Activated CD4-positive, alpha-beta memory T cell treated with anti-CD3 and anti-CD28 coated beads for 36 hours (primary cell): ENCODE measurements at regions of chr5 and their contacts with region 1.

Region 1: DNA sequence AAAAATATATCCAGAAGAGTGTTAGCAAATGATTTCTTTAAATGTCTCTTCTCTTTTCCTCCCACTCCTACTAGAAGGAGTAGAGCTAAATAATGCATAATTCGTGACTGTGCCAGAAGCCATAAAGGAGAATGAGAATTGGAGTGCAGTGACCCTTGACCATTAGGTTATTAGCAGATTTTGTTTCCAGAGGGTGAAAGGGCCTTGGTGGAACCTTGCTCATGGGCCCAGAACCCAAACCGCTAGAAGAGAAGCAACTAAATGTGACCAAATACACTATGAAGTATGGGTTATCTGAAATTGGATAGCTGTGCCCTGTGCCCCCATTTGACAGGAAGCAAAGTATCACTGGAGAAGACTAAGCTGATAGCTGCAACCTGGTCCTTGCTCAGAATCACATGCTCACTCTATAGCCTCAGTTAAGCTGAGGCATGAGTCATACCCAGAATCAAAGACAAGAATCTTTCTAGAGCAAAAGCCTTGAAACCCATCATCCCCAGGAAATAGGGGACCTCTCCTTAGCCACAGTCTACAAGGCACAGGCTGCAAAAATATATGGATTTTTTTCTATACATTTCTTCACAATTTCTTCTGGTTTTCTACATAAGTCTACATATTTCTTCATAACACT is 36.3 kb downstream of the CAPSL start:
- DNase-seq: peak; percentile 44
- H3K4me3 Mint-ChIP-seq: peak overlapping the region; percentile 41
- H3K27ac Mint-ChIP-seq: peak overlapping the region; percentile 79
- H3K4me1 Mint-ChIP-seq: peaks cover 77% of the 10 kb centered on the region
- H3K27me3 Mint-ChIP-seq: no peaks in the 10 kb centered on the region

Region 2: GRCh38 chr5:35672995-35673394 is 229.2 kb before region 1 on chr5:
- CTCF ChIA-PET with region 1: no interaction called
- POLR2A ChIA-PET with region 1: no interaction called
- intact Hi-C with region 1: loop called (anchors 1 kb)
- DNase-seq: peak; percentile 66
- H3K4me3 Mint-ChIP-seq: no peak overlapping the region
- H3K27ac Mint-ChIP-seq: peak overlapping the region; percentile 69
- H3K4me1 Mint-ChIP-seq: peaks cover 60% of the 10 kb centered on the region
- H3K27me3 Mint-ChIP-seq: no peaks in the 10 kb centered on the region

Region 3: GRCh38 chr5:35794684-35795375 is 107.3 kb before region 1 on chr5:
- CTCF ChIA-PET with region 1: interaction called, 3 read pairs
- POLR2A ChIA-PET with region 1: interaction called, 7 read pairs
- intact Hi-C with region 1: loop called (anchors 1 kb)
- DNase-seq: no peak
- H3K4me3 Mint-ChIP-seq: peak overlapping the region; percentile 31
- H3K27ac Mint-ChIP-seq: peak overlapping the region; percentile 89
- H3K4me1 Mint-ChIP-seq: peaks cover 86% of the 10 kb centered on the region
- H3K27me3 Mint-ChIP-seq: no peaks in the 10 kb centered on the region

Region 4: GRCh38 chr5:35838370-35839042 is 63.7 kb before region 1 on chr5:
- CTCF ChIA-PET with region 1: no interaction called
- POLR2A ChIA-PET with region 1: interaction called, 5 read pairs
- intact Hi-C with region 1: loop called (anchors 1 kb)
- DNase-seq: peak; percentile 76
- H3K4me3 Mint-ChIP-seq: peak overlapping the region; percentile 50
- H3K27ac Mint-ChIP-seq: peak overlapping the region; percentile 96
- H3K4me1 Mint-ChIP-seq: peaks cover 70% of the 10 kb centered on the region
- H3K27me3 Mint-ChIP-seq: no peaks in the 10 kb centered on the region

Region 5: GRCh38 chr5:35876921-35877320 is 25.2 kb before region 1 on chr5:
- CTCF ChIA-PET with region 1: no interaction called
- POLR2A ChIA-PET with region 1: interaction called, 7 read pairs
- intact Hi-C with region 1: loop called (anchors 1 kb)
- DNase-seq: no peak
- H3K4me3 Mint-ChIP-seq: no peak overlapping the region
- H3K27ac Mint-ChIP-seq: peak overlapping the region; percentile 80
- H3K4me1 Mint-ChIP-seq: peaks cover 79% of the 10 kb centered on the region
- H3K27me3 Mint-ChIP-seq: no peaks in the 10 kb centered on the region

Region 6: GRCh38 chr5:35919191-35919590 is 17.0 kb after region 1 on chr5:
- CTCF ChIA-PET with region 1: interaction called, 14 read pairs
- POLR2A ChIA-PET with region 1: interaction called, 4 read pairs
- intact Hi-C with region 1: loop called (anchors 1 kb)
- DNase-seq: peak; percentile 63
- H3K4me3 Mint-ChIP-seq: no peak overlapping the region
- H3K27ac Mint-ChIP-seq: peak overlapping the region; percentile 67
- H3K4me1 Mint-ChIP-seq: peaks cover 48% of the 10 kb centered on the region
- H3K27me3 Mint-ChIP-seq: no peaks in the 10 kb centered on the region